CD8-positive, alpha-beta T cell (primary cell): ENCODE measurements at regions of chr9 and their contacts with region 1.

Region 1: GRCh38 chr9:133992780-133993634 is 883 bp upstream of the VAV2 start:
- DNase-seq: peak; percentile 51 to 87 (median 74)
- ATAC-seq: peak; percentile 86
- H3K4me3 ChIP-seq: peak overlapping the region; percentile 72 to 76
- H3K4me3 Mint-ChIP-seq: peak overlapping the region; percentile 82
- H3K27ac ChIP-seq: no peak overlapping the region
- H3K27ac Mint-ChIP-seq: no peak overlapping the region
- H3K4me1 ChIP-seq: peaks cover 15% of the 10 kb centered on the region
- H3K4me1 Mint-ChIP-seq: peaks cover 5% of the 10 kb centered on the region
- H3K27me3 ChIP-seq: peaks cover 0 to 9% of the 10 kb centered on the region in 2 experiments
- H3K27me3 Mint-ChIP-seq: peaks cover 8% of the 10 kb centered on the region
- CTCF ChIP-seq: no peak

Region 2: DNA sequence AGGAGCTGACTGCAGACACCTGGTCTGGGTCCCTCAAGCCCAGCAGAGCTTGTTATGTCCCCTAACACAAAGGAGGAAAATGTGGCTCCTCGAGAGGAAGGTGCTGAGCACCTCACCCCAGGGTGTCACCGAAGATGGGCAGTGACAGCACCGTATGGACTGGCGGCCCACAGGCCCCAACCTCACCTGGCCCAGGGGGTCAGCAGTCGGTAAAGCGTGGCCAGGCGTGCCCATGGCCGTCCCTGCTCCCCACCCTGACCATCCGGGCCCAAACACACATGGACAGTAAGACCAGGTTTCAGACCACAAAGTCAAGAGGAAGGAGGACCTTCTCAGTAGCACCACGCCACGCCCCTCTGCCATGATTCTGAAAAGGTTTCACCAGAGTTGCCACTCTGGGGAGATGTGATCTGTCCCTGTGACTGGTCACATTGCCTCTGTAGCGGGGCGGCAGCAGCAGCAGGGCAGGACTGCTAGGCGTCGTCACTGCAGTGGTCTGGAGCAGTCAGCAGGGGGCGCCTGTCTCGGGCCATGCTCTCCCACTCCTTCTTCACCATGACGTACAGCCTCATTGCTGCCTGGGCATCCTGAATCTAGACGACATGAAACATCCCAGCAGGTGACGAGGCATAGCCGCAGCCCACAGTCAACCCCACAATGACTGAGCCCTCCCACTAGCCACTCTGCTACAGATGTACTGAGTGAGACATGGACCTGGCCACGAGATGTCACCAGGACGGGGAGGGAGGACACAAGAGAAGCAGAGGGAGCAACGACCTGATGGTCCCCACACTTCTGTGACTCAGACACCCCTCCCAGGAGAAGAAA is 586.3 kb before region 1 on chr9:
- CTCF ChIA-PET with region 1: no interaction called
- POLR2A ChIA-PET with region 1: no interaction called
- intact Hi-C with region 1: loop called in 1 of 2 experiments (anchors 10 kb)
- DNase-seq: peak; percentile 62 to 87 (median 83)
- ATAC-seq: peak; percentile 91
- H3K4me3 ChIP-seq: no peak overlapping the region
- H3K4me3 Mint-ChIP-seq: no peak overlapping the region
- H3K27ac ChIP-seq: peak overlapping the region in 1 of 2 experiments; percentile 58
- H3K27ac Mint-ChIP-seq: peak overlapping the region; percentile 64
- H3K4me1 ChIP-seq: peaks cover 3% of the 10 kb centered on the region
- H3K4me1 Mint-ChIP-seq: peaks cover 11% of the 10 kb centered on the region
- H3K27me3 ChIP-seq: no peaks in the 10 kb centered on the region
- H3K27me3 Mint-ChIP-seq: no peaks in the 10 kb centered on the region
- CTCF ChIP-seq: peak; percentile 89

Region 3: DNA sequence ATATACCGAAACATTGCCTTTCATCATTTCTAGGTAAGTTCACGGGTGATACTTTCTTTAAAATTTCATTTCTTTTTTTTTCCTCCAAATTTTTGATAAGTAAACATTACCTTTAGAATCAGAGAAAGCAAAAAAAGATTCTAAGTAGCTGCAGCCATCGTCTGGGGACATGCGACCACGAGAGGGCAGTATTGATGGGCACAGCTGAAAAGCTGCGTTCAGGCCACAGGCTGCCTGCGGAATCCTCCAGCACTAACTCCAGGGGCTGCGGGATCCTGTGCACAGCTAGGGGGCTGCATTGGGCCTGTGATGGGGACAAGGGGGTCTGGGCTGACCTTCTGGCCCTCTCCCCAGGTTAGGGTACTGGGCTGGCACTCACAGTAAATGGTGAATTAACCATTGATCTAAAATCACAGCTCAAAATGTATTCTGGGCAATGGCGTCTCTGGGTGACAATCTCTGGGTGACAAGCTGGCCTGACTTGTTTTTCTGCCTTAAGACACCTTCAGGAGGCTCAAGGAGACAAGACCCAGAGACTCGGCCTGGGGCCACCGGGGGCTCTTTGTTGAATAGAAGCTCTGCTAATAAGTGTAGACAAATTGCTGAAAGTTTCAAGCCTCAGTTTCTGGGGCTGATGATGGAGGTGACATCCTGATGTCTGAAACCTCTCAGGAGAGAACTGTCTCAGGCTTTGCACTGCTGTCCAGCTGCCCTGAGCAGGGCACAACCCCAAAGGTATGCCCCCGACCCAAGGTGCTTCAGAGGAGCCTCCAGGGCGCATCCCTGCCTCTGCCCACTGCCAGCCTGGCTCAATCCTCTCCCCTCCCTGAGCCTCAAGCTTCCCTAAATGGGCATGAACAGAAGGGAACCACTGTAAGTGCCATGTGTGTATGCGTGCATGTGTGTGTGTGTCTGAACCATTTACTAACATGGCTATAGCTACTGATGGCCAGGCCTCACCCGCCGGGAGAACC is 210.6 kb before region 1 on chr9:
- CTCF ChIA-PET with region 1: interaction called, 161 read pairs
- POLR2A ChIA-PET with region 1: interaction called, 7 read pairs
- intact Hi-C with region 1: loop called (anchors 1 kb)
- DNase-seq: peak; percentile 44 to 77 (median 67)
- ATAC-seq: peak; percentile 57
- H3K4me3 ChIP-seq: no peak overlapping the region
- H3K4me3 Mint-ChIP-seq: no peak overlapping the region
- H3K27ac ChIP-seq: no peak overlapping the region
- H3K27ac Mint-ChIP-seq: no peak overlapping the region
- H3K4me1 ChIP-seq: no peaks in the 10 kb centered on the region
- H3K4me1 Mint-ChIP-seq: no peaks in the 10 kb centered on the region
- H3K27me3 ChIP-seq: no peaks in the 10 kb centered on the region
- H3K27me3 Mint-ChIP-seq: no peaks in the 10 kb centered on the region
- CTCF ChIP-seq: peak; percentile 64

Region 4: GRCh38 chr9:133792721-133793470 is 200.1 kb before region 1 on chr9:
- CTCF ChIA-PET with region 1: interaction called, 103 read pairs
- POLR2A ChIA-PET with region 1: interaction called, 4 read pairs
- intact Hi-C with region 1: loop called in 1 of 2 experiments (anchors 1 kb)
- DNase-seq: peak; percentile 19 to 72 (median 54)
- ATAC-seq: peak; percentile 77
- H3K4me3 ChIP-seq: no peak overlapping the region
- H3K4me3 Mint-ChIP-seq: no peak overlapping the region
- H3K27ac ChIP-seq: no peak overlapping the region
- H3K27ac Mint-ChIP-seq: no peak overlapping the region
- H3K4me1 ChIP-seq: no peaks in the 10 kb centered on the region
- H3K4me1 Mint-ChIP-seq: peaks cover 2% of the 10 kb centered on the region
- H3K27me3 ChIP-seq: peaks cover 0 to 3% of the 10 kb centered on the region in 2 experiments
- H3K27me3 Mint-ChIP-seq: peaks cover 2% of the 10 kb centered on the region
- CTCF ChIP-seq: peak; percentile 87

Region 5: GRCh38 chr9:134024828-134025605 is 32.0 kb after region 1 on chr9 and contains the start of gene BRD3OS:
- CTCF ChIA-PET with region 1: interaction called, 13 read pairs
- POLR2A ChIA-PET with region 1: interaction called, 6 read pairs
- intact Hi-C with region 1: loop called (anchors 1 kb)
- DNase-seq: peak; percentile 81 to 98 (median 90)
- ATAC-seq: peak; percentile 96
- H3K4me3 ChIP-seq: peak within 1 kb of the TSS; percentile 71 to 92
- H3K4me3 Mint-ChIP-seq: peak within 1 kb of the TSS; percentile 80
- H3K27ac ChIP-seq: peak within 1 kb of the TSS; percentile 56 to 65
- H3K27ac Mint-ChIP-seq: peak within 1 kb of the TSS; percentile 45
- H3K4me1 ChIP-seq: peaks cover 11% of the 10 kb centered on the region
- H3K4me1 Mint-ChIP-seq: peaks cover 11% of the 10 kb centered on the region
- H3K27me3 ChIP-seq: no peaks in the 10 kb centered on the region
- H3K27me3 Mint-ChIP-seq: no peaks in the 10 kb centered on the region
- CTCF ChIP-seq: no peak
- total RNA-seq, gene BRD3OS: 3.3 to 4.2 TPM

Region 6: GRCh38 chr9:135830496-135830895 is 1837.5 kb after region 1 on chr9:
- CTCF ChIA-PET with region 1: no interaction called
- POLR2A ChIA-PET with region 1: no interaction called
- intact Hi-C with region 1: no loop called
- DNase-seq: no peak
- ATAC-seq: no peak
- H3K4me3 ChIP-seq: no peak overlapping the region
- H3K4me3 Mint-ChIP-seq: no peak overlapping the region
- H3K27ac ChIP-seq: no peak overlapping the region
- H3K27ac Mint-ChIP-seq: no peak overlapping the region
- H3K4me1 ChIP-seq: no peaks in the 10 kb centered on the region
- H3K4me1 Mint-ChIP-seq: peaks cover 11% of the 10 kb centered on the region
- H3K27me3 ChIP-seq: no peaks in the 10 kb centered on the region
- H3K27me3 Mint-ChIP-seq: no peaks in the 10 kb centered on the region
- CTCF ChIP-seq: no peak